ENCODE measurements at regions of chr14 and their contacts with region 1.

Region 1: DNA sequence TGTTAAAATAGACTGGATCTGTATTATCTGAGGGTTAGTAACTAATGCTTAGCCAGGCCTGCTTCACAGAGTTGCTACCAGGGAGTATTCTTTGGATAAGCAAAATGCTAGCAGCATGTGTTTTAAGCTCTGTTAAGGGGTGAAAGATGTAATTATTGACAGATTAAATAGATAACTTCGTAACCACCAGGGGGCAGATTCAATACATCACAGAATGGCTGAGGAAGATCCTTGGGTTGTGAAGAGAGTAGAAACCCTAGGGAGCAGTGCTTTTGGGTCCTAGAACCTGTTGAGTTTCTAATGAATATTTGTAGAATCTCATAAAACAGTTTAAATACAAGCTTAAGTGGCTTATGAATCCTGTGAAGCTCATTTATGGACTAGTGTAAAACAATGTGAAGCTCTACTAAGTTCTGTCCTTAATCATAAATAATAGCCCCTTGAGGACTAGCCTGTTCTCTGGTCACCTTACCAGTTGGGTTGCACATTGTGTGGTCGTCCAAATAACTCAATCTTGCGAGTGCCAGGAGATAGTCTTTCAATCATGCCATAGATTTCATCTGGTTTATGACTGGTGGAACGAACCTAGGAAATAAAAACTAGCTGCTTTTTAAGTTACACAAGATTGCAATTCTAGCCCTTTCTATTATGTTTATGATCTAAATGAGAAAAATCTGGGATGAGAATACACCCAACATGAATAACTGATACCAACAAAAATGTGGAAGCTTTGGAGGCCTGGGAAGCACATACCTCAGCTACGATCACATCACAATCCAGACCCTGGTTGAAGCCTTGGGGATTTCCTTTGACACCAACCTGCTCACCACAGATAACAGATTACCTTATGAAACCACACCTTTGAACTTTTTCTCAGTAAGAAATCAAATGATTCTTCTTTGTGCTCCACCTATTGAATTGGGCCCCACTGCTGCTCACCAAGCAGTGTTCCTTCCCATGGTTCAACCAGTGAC is 12.3 kb downstream of the METTL3 start:
- DNase-seq: peak in 1 of 2 experiments; percentile 43
- H3K4me3 ChIP-seq: no peak overlapping the region
- H3K27ac ChIP-seq: peak overlapping the region; percentile 55; the same call in 1 of the 2 replicates
- H3K4me1 ChIP-seq: peaks cover 0 to 2% (median 1%) of the 10 kb centered on the region in 4 experiments; a peak in 2 of 7 replicates
- H3K27me3 ChIP-seq: no peaks in the 10 kb centered on the region
- CTCF ChIP-seq: peak in 2 of 3 experiments; percentile 51 to 56; a peak in 3 of 4 replicates
- EP300 ChIP-seq: no peak
- POLR2A ChIP-seq: no peak
- RAD21 ChIP-seq: peak; percentile 77 to 81

Region 2: DNA sequence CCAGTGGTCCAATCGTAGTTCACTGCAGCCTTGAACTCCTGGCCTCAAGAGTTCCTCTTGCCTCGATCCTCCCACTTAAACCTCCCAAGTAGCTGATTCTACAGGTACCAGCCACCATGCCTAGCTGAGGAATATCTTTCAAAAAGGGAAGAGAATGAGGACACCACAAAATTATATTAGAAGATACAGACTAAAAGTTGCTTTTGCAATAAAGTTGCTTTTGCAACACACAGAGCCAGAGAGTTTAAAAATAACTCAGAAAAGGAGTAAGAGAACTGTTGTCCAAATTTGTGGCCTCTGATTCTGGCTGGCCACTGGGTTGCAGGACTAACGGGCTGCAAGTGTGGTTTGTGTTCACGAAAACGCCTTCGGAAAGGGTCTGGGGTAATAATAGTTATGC is 378.2 kb before region 1 on chr14:
- CTCF ChIA-PET with region 1: no interaction called
- POLR2A ChIA-PET with region 1: no interaction called
- DNase-seq: no peak
- H3K4me3 ChIP-seq: no peak overlapping the region
- H3K27ac ChIP-seq: no peak overlapping the region
- H3K4me1 ChIP-seq: no peaks in the 10 kb centered on the region
- H3K27me3 ChIP-seq: no peaks in the 10 kb centered on the region
- CTCF ChIP-seq: no peak
- EP300 ChIP-seq: no peak
- POLR2A ChIP-seq: no peak
- RAD21 ChIP-seq: no peak

Region 3: DNA sequence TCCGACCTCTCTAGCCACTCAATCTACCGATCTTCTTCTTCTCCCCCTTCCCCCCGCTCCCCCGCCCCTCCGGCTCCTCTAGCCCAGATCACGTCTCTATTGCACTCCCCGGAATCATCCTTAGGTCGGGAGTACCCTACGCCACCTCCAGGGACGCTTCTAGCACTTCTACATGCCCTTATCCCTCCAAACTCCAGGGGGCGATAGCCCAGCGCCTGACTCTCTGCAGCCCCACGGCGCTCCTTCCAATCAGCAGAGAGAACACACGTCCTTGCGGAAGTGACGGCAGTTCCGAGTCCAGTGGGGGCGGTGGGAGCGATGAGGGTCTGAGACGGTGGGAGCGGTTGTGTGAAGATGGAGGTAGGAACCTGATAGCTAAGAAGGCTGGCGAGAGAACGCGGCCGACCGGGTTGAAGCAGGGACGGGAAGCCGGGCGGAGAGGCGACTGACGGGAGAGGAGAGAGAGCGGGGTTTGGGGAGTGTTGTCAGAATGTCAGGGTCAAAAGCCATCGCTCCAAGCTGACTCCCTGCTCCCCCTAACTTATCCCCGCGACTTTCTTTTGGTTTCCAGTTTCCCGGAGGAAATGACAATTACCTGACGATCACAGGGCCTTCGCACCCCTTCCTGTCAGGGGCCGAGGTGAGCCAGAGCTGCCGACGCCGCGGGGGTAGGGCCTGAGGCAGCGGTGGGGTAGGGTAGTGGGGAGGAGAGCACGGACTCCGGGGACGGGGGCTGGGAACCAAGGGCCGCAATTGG is 21.7 kb before region 1 on chr14 and contains the starts of genes RAB2B and TOX4:
- CTCF ChIA-PET with region 1: interaction called, 16 read pairs
- POLR2A ChIA-PET with region 1: interaction called, 9 read pairs
- DNase-seq: peak; percentile 95 to 96
- H3K4me3 ChIP-seq: peak within 1 kb of the TSS; percentile 88 to 100 (median 96)
- H3K27ac ChIP-seq: peak within 1 kb of the TSS; percentile 36
- H3K4me1 ChIP-seq: no peaks in the 10 kb centered on the region; a peak in 1 of 7 replicates
- H3K27me3 ChIP-seq: no peaks in the 10 kb centered on the region
- CTCF ChIP-seq: peak; percentile 83 to 99 (median 99)
- EP300 ChIP-seq: peak in 1 of 2 experiments; percentile 66; a peak in 2 of 3 replicates
- POLR2A ChIP-seq: peak in 1 of 2 experiments; percentile 71; a peak in 2 of 3 replicates
- RAD21 ChIP-seq: peak; percentile 41 to 53; a peak in 3 of 4 replicates
- total RNA-seq, gene RAB2B: 26.1 and 27.6 TPM in 2 replicates
- total RNA-seq, gene TOX4: 49.5 and 58.3 TPM in 2 replicates

Region 4: DNA sequence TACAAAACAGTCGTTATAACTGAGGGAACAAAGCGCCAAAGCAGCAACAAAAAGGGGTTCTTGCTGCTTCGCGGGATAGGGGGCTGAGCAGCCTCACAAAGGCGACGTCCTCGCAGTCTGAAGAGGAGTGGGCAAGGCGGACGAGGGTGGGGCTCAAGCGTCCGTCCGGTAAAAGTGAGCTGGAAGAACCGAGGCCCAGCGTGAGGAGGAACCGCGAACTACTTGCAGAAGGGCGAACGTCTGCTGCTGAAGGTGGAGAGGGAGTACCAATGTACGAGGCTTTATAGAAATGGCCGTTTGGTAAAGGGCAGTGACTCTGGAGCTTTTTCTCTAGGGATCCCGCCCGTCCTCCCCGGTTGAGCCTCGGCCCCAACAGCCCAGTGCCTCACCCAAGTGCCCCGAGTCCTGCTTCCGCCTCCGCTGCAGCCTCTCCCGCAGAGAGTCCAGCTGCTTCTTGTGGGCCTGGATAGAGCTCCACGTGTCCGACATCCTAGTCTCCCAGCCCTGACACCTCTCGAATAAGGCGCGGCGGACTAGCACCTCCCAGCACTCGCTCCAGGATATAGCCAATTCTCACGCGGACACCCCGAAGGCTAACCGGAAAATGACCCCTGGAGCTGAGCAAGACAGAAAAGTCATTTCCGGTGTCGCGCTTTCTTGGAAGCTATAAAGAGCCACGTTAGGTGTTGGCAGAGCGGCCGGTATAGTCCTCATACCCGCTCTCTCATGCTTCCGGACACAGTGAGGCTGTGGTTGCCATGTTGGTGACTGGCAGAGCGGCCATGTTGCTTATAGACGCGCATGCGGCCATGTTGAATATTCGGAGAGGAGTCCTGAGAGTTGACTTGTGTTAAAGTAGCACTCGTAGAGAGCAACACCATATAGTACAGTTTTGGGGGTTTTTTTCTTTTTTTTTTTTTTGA is 12.2 kb after region 1 on chr14 and contains the start of gene METTL3:
- CTCF ChIA-PET with region 1: interaction called, 19 read pairs
- POLR2A ChIA-PET with region 1: interaction called, 61 read pairs
- DNase-seq: peak; percentile 83 to 93
- H3K4me3 ChIP-seq: peak within 1 kb of the TSS; percentile 58 to 98 (median 86)
- H3K27ac ChIP-seq: peak within 1 kb of the TSS; percentile 88
- H3K4me1 ChIP-seq: peaks cover 0 to 5% (median 2%) of the 10 kb centered on the region in 4 experiments; a peak in 4 of 7 replicates
- H3K27me3 ChIP-seq: no peaks in the 10 kb centered on the region
- CTCF ChIP-seq: no peak
- EP300 ChIP-seq: no peak
- POLR2A ChIP-seq: peak; percentile 74 to 93
- RAD21 ChIP-seq: 0 out of 4 replicates have a peak, but pooled peaks of 1 of the 2 experiments have one; percentile 4
- total RNA-seq, gene METTL3: 98.6 and 103 TPM in 2 replicates

Region 5: DNA sequence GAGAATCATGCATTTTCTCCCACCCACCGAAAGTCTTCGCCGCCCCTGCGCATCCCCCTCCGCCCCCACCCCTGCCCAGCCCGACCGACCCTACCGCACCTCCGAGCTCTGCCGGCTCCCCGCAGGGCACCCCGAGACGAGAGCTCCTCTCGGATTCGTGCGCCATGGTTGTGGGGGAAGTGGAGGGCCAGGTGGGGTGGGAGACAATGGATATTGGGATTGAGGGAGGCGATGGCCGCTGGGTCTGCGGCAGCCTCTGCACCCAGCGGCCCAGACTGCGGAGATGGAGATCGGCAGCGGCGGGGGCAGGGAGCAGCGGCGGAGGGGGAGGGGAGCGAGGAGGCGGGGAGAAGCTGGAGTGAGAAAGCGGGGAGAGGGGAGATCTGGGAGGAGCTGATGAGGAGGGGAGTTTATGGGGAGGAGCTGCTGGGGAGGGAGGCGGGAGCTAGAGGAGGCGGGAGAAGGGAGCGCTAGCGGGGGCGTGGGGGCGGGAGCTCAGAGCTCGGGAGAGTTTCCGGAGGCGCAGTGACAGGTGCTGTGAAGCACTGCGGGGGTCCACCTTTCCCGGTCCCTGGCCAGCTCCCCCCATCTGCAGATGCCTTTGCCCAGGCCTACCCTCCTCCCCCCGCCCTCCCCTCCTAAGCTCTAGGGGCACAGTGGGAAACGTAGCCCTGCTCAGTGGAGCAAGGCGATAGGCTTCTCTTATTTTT is 27.3 kb after region 1 on chr14 and contains the start of gene SALL2:
- CTCF ChIA-PET with region 1: interaction called, 59 read pairs
- POLR2A ChIA-PET with region 1: interaction called, 18 read pairs
- DNase-seq: peak; percentile 93 to 97
- H3K4me3 ChIP-seq: peak within 1 kb of the TSS; percentile 50 to 82 (median 71)
- H3K27ac ChIP-seq: peak within 1 kb of the TSS; percentile 90
- H3K4me1 ChIP-seq: peaks cover 14 to 69% (median 42%) of the 10 kb centered on the region in 4 experiments
- H3K27me3 ChIP-seq: no peaks in the 10 kb centered on the region
- CTCF ChIP-seq: no peak
- EP300 ChIP-seq: peak in 1 of 2 experiments; percentile 87; a peak in 1 of 3 replicates
- POLR2A ChIP-seq: peak; percentile 36 to 85
- RAD21 ChIP-seq: peak in 1 of 2 experiments; percentile 16; a peak in 1 of 4 replicates
- total RNA-seq, gene SALL2: 346 and 360 TPM in 2 replicates

Region 6: GRCh38 chr14:21557084-21557901 is 58.5 kb after region 1 on chr14:
- CTCF ChIA-PET with region 1: interaction called, 64 read pairs
- POLR2A ChIA-PET with region 1: interaction called, 30 read pairs
- DNase-seq: peak; percentile 84 to 97
- H3K4me3 ChIP-seq: peak overlapping the region in 2 of 4 experiments; percentile 21 to 32; a peak in 2 of 8 replicates
- H3K27ac ChIP-seq: peak overlapping the region; percentile 82
- H3K4me1 ChIP-seq: peaks cover 7 to 24% (median 18%) of the 10 kb centered on the region in 4 experiments
- H3K27me3 ChIP-seq: no peaks in the 10 kb centered on the region
- CTCF ChIP-seq: peak in 2 of 3 experiments; percentile 55 to 69; a peak in 3 of 4 replicates
- EP300 ChIP-seq: peak; percentile 69 to 95
- POLR2A ChIP-seq: peak in 1 of 2 experiments; percentile 70; a peak in 2 of 3 replicates
- RAD21 ChIP-seq: peak; percentile 82 to 84

Measured in H1 (cell line).